A673 (cell line): ENCODE measurements at regions of chr3 and their contacts with region 1.

Region 1: DNA sequence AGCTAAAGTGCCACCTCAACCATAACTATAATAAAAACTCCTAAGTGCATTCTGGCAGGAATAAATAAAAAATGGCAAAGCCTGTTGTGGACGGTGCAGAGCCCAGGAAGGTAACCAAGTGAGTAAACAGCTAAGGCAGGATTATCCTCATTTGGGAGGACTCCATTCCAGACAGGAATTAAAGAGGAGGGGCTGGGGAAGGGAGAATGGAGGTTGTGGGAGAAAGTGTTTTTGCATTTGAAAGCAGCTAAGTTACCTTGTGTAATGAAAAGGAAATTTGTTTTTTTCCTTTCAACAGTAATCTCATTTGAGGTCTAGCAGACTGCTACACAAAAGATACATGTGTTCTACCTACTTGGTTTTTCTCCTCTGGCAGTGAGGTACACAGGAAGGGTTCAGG is 248.5 kb downstream of the TIGIT start:
- DNase-seq: no peak
- H3K4me3 ChIP-seq: no peak overlapping the region
- H3K27ac ChIP-seq: no peak overlapping the region
- H3K4me1 ChIP-seq: no peaks in the 10 kb centered on the region
- H3K27me3 ChIP-seq: no peaks in the 10 kb centered on the region
- CTCF ChIP-seq: no peak

Region 2: GRCh38 chr3:114958930-114959329 is 416.6 kb after region 1 on chr3:
- CTCF ChIA-PET with region 1: no interaction called
- POLR2A ChIA-PET with region 1: interaction called, 11 read pairs
- intact Hi-C with region 1: no loop called
- DNase-seq: no peak
- H3K4me3 ChIP-seq: no peak overlapping the region
- H3K27ac ChIP-seq: no peak overlapping the region
- H3K4me1 ChIP-seq: no peaks in the 10 kb centered on the region
- H3K27me3 ChIP-seq: no peaks in the 10 kb centered on the region
- CTCF ChIP-seq: no peak